HepG2 (cell line): ENCODE measurements at regions of chr20 and their contacts with region 1.

Region 1: DNA sequence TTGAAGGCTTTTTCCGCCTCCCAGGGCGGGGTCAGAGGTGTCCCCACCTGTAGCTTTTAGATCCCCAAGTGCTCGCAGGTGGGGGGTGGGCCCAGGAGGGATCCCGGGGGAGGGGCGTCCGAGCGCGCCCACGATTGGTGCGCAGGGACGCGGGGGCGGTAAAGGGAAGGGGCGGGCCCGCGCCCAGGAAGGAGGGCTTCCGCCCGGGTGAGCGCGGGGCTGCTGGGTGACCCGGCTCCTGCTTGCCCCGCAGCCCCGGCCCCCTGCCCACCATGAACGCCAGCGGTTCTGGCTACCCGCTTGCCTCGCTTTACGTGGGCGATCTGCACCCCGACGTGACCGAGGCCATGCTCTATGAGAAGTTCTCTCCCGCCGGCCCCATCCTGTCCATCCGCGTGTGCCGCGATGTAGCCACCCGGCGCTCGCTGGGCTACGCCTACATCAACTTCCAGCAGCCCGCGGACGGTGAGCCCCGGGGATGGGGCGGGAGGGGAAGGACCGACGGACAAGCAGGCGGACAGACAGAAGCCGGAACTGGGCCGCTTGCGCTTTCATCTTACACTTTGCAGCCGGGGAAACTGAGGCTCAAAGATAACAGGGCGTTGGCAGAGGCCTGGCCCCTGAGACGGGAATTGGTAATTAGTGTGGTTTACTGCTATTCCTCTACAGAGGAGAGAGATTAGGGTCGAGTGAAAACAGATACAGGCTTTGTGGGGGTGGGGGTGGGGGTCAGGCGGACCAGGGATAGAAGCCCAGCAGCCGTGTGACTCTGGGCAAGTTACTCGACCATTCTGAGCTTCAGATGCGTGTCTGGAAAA is at the start of gene PABPC1L:
- DNase-seq: peak; percentile 78
- ATAC-seq: peak; percentile 90
- H3K4me3 ChIP-seq: peak within 1 kb of the TSS; percentile 87 to 97 (median 95)
- H3K27ac ChIP-seq: peak within 1 kb of the TSS; percentile 65
- H3K4me1 ChIP-seq: peaks cover 14% of the 10 kb centered on the region
- H3K27me3 ChIP-seq: no peaks in the 10 kb centered on the region; a peak in 1 of 5 replicates
- CTCF ChIP-seq: 0 out of 2 replicates have a peak, but pooled peaks have one; percentile 8
- EP300 ChIP-seq: no peak
- POLR2A ChIP-seq: peak; percentile 66 to 89
- RAD21 ChIP-seq: peak; percentile 64
- total RNA-seq, gene PABPC1L: 6.4 and 30.8 TPM in 2 replicates

Region 2: DNA sequence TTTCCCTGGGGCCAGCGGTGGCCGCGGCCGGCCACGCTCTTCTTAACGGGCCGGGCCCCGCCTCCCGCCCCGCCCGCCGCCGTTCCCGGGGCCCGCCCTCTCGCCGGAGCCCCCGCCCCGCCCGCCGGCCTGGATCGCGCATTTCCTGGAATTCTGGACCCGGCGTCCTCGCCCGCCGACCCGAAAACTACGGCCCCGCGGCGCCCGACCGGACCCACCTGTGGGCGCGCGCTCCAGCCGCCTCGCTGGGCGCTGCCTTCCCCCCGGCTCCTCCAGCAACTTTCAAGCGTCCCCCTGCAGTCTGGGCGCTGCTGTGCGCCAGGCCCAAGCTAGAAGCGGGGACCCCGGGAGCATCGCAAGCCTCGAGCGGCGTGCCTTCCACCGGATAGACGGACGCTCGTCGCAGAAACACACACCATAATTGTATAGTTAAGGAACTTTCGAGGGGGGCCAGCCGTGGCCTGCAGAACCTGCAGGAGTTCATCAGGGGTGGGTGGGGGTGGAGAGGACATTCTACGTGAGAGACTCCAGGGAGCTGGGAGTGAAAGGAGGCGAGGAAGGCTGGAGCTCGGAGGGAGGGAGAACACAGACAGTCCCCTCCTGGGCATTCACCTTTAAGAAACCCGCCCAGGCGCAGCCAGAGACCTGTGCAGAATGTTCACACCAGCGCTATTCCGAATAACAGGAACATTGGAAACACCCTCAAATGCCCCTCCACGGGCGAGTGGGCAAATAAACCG is 258.2 kb before region 1 on chr20 and contains the start of gene ADA:
- CTCF ChIA-PET with region 1: no interaction called
- POLR2A ChIA-PET with region 1: no interaction called
- in situ Hi-C with region 1: no loop called
- intact Hi-C with region 1: no loop called
- DNase-seq: peak; percentile 47
- ATAC-seq: peak; percentile 85
- H3K4me3 ChIP-seq: peak within 1 kb of the TSS; percentile 69 to 78 (median 71)
- H3K27ac ChIP-seq: no peak within 1 kb of the TSS
- H3K4me1 ChIP-seq: peaks cover 17% of the 10 kb centered on the region
- H3K27me3 ChIP-seq: peaks cover 5 to 39% of the 10 kb centered on the region in 2 experiments; a peak in 3 of 5 replicates
- CTCF ChIP-seq: no peak
- EP300 ChIP-seq: no peak
- POLR2A ChIP-seq: no peak; a peak in 1 of 4 replicates
- RAD21 ChIP-seq: no peak
- total RNA-seq, gene ADA: 2.5 and 2.7 TPM in 2 replicates

Region 3: GRCh38 chr20:44885392-44886265 is 24.5 kb before region 1 on chr20 and contains the start of gene YWHAB:
- CTCF ChIA-PET with region 1: no interaction called
- POLR2A ChIA-PET with region 1: interaction called, 42 read pairs
- in situ Hi-C with region 1: no loop called
- intact Hi-C with region 1: loop called (anchors 1 kb)
- DNase-seq: peak; percentile 98
- ATAC-seq: peak; percentile 96
- H3K4me3 ChIP-seq: peak within 1 kb of the TSS; percentile 88 to 97 (median 92)
- H3K27ac ChIP-seq: peak within 1 kb of the TSS; percentile 91
- H3K4me1 ChIP-seq: peaks cover 60% of the 10 kb centered on the region
- H3K27me3 ChIP-seq: no peaks in the 10 kb centered on the region; a peak in 1 of 5 replicates
- CTCF ChIP-seq: peak; percentile 24
- EP300 ChIP-seq: peak in 1 of 2 experiments; percentile 66; a peak in 2 of 4 replicates
- POLR2A ChIP-seq: peak; percentile 64 to 75
- RAD21 ChIP-seq: peak; percentile 68
- total RNA-seq, gene YWHAB: 121 and 184 TPM in 2 replicates

Region 4: DNA sequence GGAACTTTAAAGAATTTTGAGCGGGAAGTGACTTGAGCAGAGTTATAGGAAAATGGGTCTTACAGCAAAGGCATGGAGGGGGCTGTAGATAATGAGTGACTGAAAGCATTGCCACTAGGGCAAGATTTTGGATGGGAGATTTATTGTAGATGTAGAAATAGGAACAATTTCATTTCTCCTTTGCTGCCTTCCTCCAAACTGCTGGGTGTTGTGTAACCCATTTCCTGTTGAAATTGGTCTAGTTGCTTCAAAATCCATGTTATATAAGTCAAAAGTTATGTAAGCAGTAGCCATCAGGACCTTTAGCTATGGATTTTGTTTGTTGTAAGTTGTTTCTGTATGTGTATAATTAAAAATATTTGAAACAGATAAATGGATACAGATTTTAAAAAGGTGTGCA is 13.5 kb before region 1 on chr20:
- CTCF ChIA-PET with region 1: no interaction called
- POLR2A ChIA-PET with region 1: interaction called, 14 read pairs
- in situ Hi-C with region 1: no loop called
- intact Hi-C with region 1: no loop called
- DNase-seq: peak; percentile 35
- ATAC-seq: no peak; the same call in 2 of the 3 replicates
- H3K4me3 ChIP-seq: no peak overlapping the region
- H3K27ac ChIP-seq: no peak overlapping the region
- H3K4me1 ChIP-seq: peaks cover 47% of the 10 kb centered on the region
- H3K27me3 ChIP-seq: no peaks in the 10 kb centered on the region
- CTCF ChIP-seq: no peak
- EP300 ChIP-seq: peak in 1 of 2 experiments; percentile 60; a peak in 1 of 4 replicates
- POLR2A ChIP-seq: no peak
- RAD21 ChIP-seq: no peak

Region 5: DNA sequence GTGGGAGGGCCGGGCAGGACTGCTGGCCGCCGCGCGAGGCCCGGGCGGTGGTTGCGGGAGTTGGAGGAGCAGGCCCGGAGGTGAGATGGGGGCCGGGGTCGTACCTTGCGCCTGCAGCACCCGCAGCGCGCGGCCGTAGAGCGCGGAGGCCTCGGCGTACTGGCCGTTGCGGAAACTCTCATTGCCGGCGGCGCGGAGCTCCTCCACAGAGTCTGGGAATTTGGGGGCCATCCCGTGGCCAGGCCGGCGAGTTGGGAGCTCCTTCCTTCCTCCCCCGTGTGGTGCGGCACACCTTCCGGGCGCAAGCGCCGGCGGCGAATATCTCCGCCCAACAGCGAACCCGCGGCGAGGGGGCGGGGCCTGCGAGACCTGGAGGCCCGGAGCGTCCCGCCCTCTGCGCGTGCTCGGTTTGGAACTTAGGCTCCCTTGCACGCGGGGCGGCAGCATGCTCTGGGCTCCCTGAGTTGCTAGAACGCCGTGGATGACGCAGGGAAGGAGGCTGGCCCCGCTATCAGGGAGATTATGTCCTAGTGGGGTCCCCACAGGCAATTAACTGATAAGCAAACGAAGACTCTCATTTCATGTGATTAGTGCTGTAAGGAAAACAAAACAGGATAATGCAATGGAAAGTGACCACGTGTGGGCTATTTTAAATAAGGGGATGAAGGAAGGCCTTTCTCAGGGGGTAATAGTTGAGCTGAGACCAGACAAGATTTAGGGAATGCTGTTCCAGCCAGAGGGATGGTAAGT is 50.2 kb after region 1 on chr20 and contains the start of gene TOMM34:
- CTCF ChIA-PET with region 1: no interaction called
- POLR2A ChIA-PET with region 1: interaction called, 33 read pairs
- in situ Hi-C with region 1: no loop called
- intact Hi-C with region 1: loop called (anchors 1 kb)
- DNase-seq: peak; percentile 94
- ATAC-seq: peak; percentile 96
- H3K4me3 ChIP-seq: peak within 1 kb of the TSS; percentile 83 to 94 (median 90)
- H3K27ac ChIP-seq: peak within 1 kb of the TSS; percentile 66
- H3K4me1 ChIP-seq: peaks cover 61% of the 10 kb centered on the region
- H3K27me3 ChIP-seq: no peaks in the 10 kb centered on the region
- CTCF ChIP-seq: peak; percentile 53
- EP300 ChIP-seq: no peak
- POLR2A ChIP-seq: peak; percentile 90 to 97
- RAD21 ChIP-seq: no peak; the same call in none of the 2 replicates
- total RNA-seq, gene TOMM34: 52.0 and 73.0 TPM in 2 replicates

Region 6: DNA sequence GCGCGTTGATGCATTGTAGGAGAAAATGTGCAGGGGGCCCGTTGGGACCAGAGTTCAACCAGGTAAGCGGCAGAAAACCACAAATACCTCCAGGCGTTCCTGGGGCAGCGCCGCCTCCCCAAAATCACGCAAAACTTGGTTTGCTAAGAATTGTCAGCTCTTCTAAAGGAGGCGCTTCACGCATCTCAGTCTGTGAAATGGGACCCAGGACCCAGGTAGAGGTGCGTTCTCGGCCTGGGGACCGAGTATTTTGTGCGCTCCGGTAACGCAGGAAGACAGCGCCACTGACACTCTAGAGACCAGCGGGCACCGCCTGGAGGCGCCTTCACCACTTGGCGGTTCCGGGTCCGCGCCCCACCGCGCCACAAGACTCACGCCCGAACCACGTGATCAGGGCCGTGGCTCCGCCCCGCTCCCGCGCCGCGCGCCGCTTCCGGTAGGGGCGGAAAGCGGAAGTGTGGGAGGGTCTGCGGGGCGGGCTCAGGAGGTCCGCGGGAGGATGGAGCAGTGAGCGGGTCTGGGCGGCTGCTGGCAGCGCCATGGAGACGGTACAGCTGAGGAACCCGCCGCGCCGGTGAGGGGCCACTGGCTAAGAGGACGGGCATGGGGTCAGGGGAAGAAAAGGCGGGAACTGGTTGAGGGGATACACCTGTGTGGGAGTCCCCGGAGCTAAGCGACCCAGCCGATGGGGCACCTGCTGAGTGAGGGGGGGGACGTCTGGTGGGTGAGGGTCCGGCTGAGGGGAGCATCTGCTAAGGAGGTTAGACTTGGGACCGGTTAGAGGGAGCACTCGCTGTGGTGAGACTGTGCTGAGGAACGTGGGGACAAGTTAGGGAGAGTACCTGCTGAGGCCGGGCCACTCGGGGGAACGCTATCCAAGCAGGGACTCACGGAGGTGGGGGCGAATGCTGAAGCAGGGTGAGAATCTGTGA is 56.2 kb after region 1 on chr20 and contains the start of gene STK4:
- CTCF ChIA-PET with region 1: no interaction called
- POLR2A ChIA-PET with region 1: interaction called, 5 read pairs
- in situ Hi-C with region 1: no loop called
- intact Hi-C with region 1: loop called (anchors 2 kb)
- DNase-seq: peak; percentile 96
- ATAC-seq: peak; percentile 95
- H3K4me3 ChIP-seq: peak within 1 kb of the TSS; percentile 83 to 100 (median 87)
- H3K27ac ChIP-seq: peak within 1 kb of the TSS; percentile 81
- H3K4me1 ChIP-seq: peaks cover 68% of the 10 kb centered on the region
- H3K27me3 ChIP-seq: peaks cover 0 to 4% of the 10 kb centered on the region in 2 experiments; a peak in 1 of 5 replicates
- CTCF ChIP-seq: peak; percentile 95
- EP300 ChIP-seq: peak; percentile 11 to 61; a peak in 2 of 4 replicates
- POLR2A ChIP-seq: peak; percentile 96 to 98
- RAD21 ChIP-seq: no peak; the same call in none of the 2 replicates
- total RNA-seq, gene STK4: 38.3 and 61.4 TPM in 2 replicates

Region 7: GRCh38 chr20:45014671-45015415 is 104.8 kb after region 1 on chr20:
- CTCF ChIA-PET with region 1: no interaction called
- POLR2A ChIA-PET with region 1: no interaction called
- in situ Hi-C with region 1: no loop called
- intact Hi-C with region 1: no loop called
- DNase-seq: no peak
- ATAC-seq: no peak
- H3K4me3 ChIP-seq: no peak overlapping the region
- H3K27ac ChIP-seq: peak overlapping the region; percentile 4
- H3K4me1 ChIP-seq: peaks cover 9% of the 10 kb centered on the region; the same call in 1 of the 2 replicates
- H3K27me3 ChIP-seq: no peaks in the 10 kb centered on the region
- CTCF ChIP-seq: no peak
- EP300 ChIP-seq: no peak
- POLR2A ChIP-seq: no peak
- RAD21 ChIP-seq: no peak